PC-3 (cell line): ENCODE measurements at regions of chr20 and their contacts with region 1.

Region 1: DNA sequence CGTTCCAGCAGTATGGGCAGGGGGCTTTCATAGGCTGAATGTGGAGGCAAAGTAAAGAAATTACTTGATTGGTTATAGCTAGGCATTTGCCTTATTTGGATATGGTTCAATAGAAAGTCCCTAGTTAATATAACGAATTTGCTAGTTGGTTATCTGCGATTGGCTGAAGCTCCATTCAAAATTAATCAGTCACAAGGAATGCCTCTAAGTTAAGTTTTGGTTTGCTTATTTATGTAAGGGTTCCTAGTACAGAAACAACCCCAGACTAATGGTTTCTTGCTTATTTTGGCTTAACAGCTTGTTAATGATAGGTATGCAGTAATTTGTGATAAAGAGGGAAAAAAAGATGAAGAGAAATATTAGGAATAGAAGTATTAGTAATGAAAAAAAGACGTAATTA is 87.5 kb downstream of the JAG1 start:
- DNase-seq: no peak
- ATAC-seq: no peak
- H3K4me3 ChIP-seq: no peak overlapping the region
- H3K27ac ChIP-seq: no peak overlapping the region
- H3K4me1 ChIP-seq: peaks cover 32% of the 10 kb centered on the region
- H3K27me3 ChIP-seq: no peaks in the 10 kb centered on the region
- CTCF ChIP-seq: no peak

Region 2: DNA sequence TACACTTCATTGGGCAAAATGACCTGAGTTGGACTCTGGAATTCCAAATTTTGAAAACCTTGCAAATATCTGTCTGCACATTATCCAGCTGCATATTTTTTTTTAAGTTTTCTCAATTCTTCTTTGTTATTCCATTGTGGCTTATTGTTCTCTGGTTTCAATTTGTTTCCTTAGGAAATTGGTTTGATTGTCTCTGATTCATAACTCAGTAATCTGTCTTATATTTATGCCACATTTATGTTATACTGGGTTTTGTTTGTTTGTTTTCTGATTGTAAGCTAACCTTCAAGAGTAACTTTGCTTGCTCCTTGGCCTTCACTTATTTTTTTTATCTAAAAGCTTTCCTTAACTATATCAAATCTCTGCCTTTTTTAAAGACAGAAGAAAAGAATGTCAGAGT is 1710.7 kb before region 1 on chr20:
- CTCF ChIA-PET with region 1: no interaction called
- POLR2A ChIA-PET with region 1: no interaction called
- intact Hi-C with region 1: loop called (anchors 5 kb)
- DNase-seq: peak; percentile 28
- ATAC-seq: peak; percentile 58
- H3K4me3 ChIP-seq: no peak overlapping the region
- H3K27ac ChIP-seq: no peak overlapping the region
- H3K4me1 ChIP-seq: peaks cover 13% of the 10 kb centered on the region
- H3K27me3 ChIP-seq: no peaks in the 10 kb centered on the region
- CTCF ChIP-seq: no peak

Region 3: GRCh38 chr20:10761232-10761631 is 174.9 kb after region 1 on chr20:
- CTCF ChIA-PET with region 1: no interaction called
- POLR2A ChIA-PET with region 1: no interaction called
- intact Hi-C with region 1: no loop called
- DNase-seq: peak; percentile 93
- ATAC-seq: peak; percentile 65
- H3K4me3 ChIP-seq: 0 out of 2 replicates have a peak overlapping the region, but pooled peaks have one; percentile 9
- H3K27ac ChIP-seq: peak overlapping the region; percentile 94
- H3K4me1 ChIP-seq: peaks cover 42% of the 10 kb centered on the region
- H3K27me3 ChIP-seq: no peaks in the 10 kb centered on the region
- CTCF ChIP-seq: no peak